SK-N-SH (cell line): ENCODE measurements at regions of chr10 and their contacts with region 1.

Region 1: DNA sequence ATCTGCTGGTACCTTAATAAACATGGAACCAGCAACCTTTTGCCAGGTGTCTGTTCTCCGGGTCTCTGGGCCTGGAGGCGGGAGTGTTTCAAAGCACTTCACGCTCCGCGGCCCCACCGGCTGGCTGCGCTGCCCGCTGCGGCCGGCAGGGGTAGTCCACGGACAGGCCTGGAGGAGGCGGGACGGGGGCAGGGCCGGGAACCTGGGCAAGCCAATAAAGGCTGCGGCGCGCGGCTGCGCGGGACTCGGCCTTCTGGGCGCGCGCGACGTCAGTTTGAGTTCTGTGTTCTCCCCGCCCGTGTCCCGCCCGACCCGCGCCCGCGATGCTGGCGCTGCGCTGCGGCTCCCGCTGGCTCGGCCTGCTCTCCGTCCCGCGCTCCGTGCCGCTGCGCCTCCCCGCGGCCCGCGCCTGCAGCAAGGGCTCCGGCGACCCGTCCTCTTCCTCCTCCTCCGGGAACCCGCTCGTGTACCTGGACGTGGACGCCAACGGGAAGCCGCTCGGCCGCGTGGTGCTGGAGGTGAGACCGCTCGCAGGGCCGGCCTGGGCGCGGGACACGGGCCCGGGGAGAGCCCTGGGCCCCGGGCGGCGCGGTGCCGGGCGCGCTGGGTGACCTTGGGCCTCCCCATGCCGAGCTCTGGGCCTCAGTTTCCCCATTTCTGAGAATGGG is at the start of gene PPIF:
- DNase-seq: peak; percentile 97
- H3K4me3 ChIP-seq: peak within 1 kb of the TSS; percentile 95 to 96
- H3K27ac ChIP-seq: peak within 1 kb of the TSS; percentile 70 to 79
- H3K4me1 ChIP-seq: peaks cover 13 to 56% of the 10 kb centered on the region in 2 experiments; a peak in 3 of 4 replicates
- H3K27me3 ChIP-seq: no peaks in the 10 kb centered on the region
- CTCF ChIP-seq: peak; percentile 83
- EP300 ChIP-seq: no peak
- RAD21 ChIP-seq: peak; percentile 56
- polyA plus RNA-seq, gene PPIF: 73.8 and 85.9 TPM in 2 replicates

Region 2: GRCh38 chr10:79333478-79333877 is 13.9 kb before region 1 on chr10:
- CTCF ChIA-PET with region 1: interaction called, 11 read pairs
- POLR2A ChIA-PET with region 1: no interaction called
- DNase-seq: no peak
- H3K4me3 ChIP-seq: no peak overlapping the region
- H3K27ac ChIP-seq: peak overlapping the region in 1 of 2 experiments; percentile 86; a peak in 2 of 4 replicates
- H3K4me1 ChIP-seq: peaks cover 0 to 9% of the 10 kb centered on the region in 2 experiments; a peak in 2 of 4 replicates
- H3K27me3 ChIP-seq: no peaks in the 10 kb centered on the region
- CTCF ChIP-seq: no peak
- EP300 ChIP-seq: peak in 1 of 2 experiments; percentile 84; a peak in 2 of 4 replicates
- RAD21 ChIP-seq: no peak